Ascending aorta (tissue), 2 donors: ENCODE measurements at regions of chr18 and their contacts with region 1.

Region 1: DNA sequence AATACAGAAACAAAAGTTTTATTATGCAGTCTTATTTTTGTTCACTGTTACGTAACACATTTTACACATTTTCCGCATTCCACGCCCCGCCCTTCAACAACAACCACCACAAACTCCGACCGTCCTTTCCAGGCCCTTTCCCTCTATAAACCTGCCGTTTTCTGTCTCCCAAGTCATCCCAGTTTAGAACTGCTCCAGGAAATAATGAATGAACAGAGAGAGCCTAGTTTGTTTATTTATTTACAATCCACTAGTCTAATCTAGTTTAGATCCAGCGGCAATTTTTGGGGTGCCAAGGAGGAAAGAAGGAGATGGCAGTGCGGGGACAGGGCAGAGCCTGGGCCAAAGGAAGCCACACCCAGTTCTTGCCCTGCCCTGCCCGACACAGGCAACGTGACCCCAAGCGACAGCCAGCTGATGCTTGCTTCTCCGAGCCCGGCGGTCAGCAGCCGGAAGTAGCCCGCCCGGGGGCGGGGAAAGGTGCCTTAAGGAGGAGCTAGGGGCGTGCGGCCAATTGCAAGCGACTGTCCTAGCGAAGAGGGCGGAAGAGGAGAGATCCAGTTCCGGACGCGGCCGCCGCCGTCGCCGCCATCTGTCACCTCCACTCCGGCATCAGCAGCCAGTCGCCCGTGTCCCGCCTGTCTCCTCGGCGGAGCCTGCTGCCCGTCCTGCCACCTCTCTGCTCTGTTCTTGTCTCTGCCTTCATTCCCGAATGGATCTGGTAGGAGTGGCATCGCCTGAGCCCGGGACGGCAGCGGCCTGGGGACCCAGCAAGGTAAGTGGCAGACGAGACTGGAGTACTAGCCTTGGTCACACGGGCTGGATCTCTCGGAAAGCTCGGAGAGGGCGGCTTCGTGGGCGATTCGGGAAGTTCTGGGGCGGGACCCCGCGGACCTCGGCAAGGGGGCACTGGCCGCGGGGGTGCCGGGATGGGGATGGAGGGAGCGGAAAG is at the start of gene RIOK3:
- DNase-seq: peak; percentile 91 to 99
- H3K4me3 ChIP-seq: peak within 1 kb of the TSS; percentile 79 to 89
- H3K27ac ChIP-seq: peak within 1 kb of the TSS; percentile 91 to 92
- H3K4me1 ChIP-seq: peaks cover 3 to 32% of the 10 kb centered on the region in 2 donors
- H3K27me3 ChIP-seq: no peaks in the 10 kb centered on the region
- CTCF ChIP-seq: no peak
- total RNA-seq, gene RIOK3: 9.3 TPM

Region 2: GRCh38 chr18:23437357-23438045 is 15.5 kb before region 1 on chr18:
- intact Hi-C with region 1: loop called (anchors 2 kb)
- DNase-seq: peak; percentile 33 to 88
- H3K4me3 ChIP-seq: peak overlapping the region; percentile 56 to 95
- H3K27ac ChIP-seq: peak overlapping the region in 1 of 2 donors; percentile 54
- H3K4me1 ChIP-seq: no peaks in the 10 kb centered on the region
- H3K27me3 ChIP-seq: no peaks in the 10 kb centered on the region
- CTCF ChIP-seq: no peak

Region 3: DNA sequence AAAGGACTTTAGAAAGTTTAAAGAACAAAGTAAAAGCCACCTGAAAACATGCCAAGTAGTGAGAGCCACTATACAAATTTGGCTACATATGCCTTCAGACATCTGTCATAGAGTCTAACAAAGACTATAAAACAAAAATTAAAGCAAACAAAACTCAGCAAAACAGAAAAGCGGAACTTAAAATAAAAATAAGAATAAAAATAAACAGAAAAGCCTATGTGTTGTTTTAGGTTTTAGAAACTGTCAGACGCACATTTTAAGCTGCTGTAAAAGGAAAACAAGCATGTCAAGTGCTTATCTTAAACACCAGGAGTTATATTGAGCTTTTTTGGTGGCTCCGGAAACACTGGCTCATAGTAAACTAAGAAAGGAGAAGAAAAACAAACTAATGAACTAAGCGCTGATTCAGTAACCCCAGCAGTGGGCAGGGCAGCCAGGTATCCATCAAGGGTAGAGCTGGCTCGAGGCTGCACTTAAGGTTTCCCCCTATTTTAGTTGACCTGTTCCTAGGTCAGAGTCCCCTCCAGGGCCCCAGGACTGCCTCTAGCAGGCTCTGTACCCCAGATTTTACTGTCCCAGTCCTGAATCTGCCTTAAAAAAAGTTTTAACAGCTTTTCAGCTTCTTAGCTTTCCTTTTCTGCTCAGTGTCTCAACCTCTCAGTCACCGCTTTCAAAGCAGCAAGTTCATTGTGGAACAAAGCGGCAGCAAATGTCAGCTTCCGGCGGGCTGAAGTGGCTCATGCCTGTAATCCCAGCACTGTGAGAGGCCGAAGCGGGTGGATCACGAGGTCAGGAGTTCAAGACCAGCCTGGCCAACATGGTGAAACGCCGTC is 35.0 kb after region 1 on chr18:
- intact Hi-C with region 1: loop called (anchors 1 kb)
- DNase-seq: peak; percentile 42 to 82
- H3K4me3 ChIP-seq: peak overlapping the region; percentile 47 to 61
- H3K27ac ChIP-seq: peak overlapping the region; percentile 90 to 95
- H3K4me1 ChIP-seq: peaks cover 3 to 19% of the 10 kb centered on the region in 2 donors
- H3K27me3 ChIP-seq: no peaks in the 10 kb centered on the region
- CTCF ChIP-seq: no peak

Region 4: DNA sequence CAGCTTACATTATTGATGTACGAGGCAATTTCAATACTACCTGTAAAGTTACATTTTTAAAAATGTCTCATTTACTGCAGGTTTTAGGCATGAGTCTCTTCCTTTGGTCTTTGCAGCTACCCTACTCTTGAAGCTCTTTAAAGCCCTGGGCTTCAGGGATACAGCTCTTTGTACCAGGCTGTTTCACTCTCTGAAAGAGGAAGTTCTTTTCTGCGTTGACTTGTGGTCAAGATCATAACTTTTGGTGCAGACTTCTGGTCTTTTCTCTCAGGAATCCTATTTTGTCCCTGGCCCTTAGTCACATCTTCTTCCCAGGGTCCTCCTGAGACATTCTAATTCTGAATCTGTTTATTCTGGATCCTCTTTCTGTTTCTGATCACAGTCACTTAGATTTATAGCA is 990.9 kb after region 1 on chr18:
- intact Hi-C with region 1: no loop called
- DNase-seq: no peak
- H3K4me3 ChIP-seq: no peak overlapping the region
- H3K27ac ChIP-seq: no peak overlapping the region
- H3K4me1 ChIP-seq: no peaks in the 10 kb centered on the region
- H3K27me3 ChIP-seq: no peaks in the 10 kb centered on the region
- CTCF ChIP-seq: no peak